Endothelial cell of umbilical vein (primary cell): ENCODE measurements at regions of chr1 and their contacts with region 1.

Region 1: GRCh38 chr1:235075188-235075926 is 53.3 kb downstream of the TOMM20 start:
- DNase-seq: peak; percentile 92
- H3K4me3 ChIP-seq: no peak overlapping the region
- H3K27ac ChIP-seq: peak overlapping the region; percentile 95
- H3K4me1 ChIP-seq: peaks cover 33% of the 10 kb centered on the region
- H3K27me3 ChIP-seq: no peaks in the 10 kb centered on the region
- CTCF ChIP-seq: no peak
- POLR2A ChIP-seq: peak; percentile 58

Region 2: GRCh38 chr1:234326497-234327366 is 748.6 kb before region 1 on chr1:
- CTCF ChIA-PET with region 1: no interaction called
- POLR2A ChIA-PET with region 1: no interaction called
- dilution Hi-C with region 1: no loop called
- intact Hi-C with region 1: loop called (anchors 5 kb)
- DNase-seq: peak; percentile 56
- H3K4me3 ChIP-seq: peak overlapping the region; percentile 34 to 65 (median 40)
- H3K27ac ChIP-seq: no peak overlapping the region
- H3K4me1 ChIP-seq: no peaks in the 10 kb centered on the region
- H3K27me3 ChIP-seq: peaks cover 12 to 13% of the 10 kb centered on the region in 2 experiments
- CTCF ChIP-seq: peak; percentile 81 to 85
- POLR2A ChIP-seq: no peak

Region 3: DNA sequence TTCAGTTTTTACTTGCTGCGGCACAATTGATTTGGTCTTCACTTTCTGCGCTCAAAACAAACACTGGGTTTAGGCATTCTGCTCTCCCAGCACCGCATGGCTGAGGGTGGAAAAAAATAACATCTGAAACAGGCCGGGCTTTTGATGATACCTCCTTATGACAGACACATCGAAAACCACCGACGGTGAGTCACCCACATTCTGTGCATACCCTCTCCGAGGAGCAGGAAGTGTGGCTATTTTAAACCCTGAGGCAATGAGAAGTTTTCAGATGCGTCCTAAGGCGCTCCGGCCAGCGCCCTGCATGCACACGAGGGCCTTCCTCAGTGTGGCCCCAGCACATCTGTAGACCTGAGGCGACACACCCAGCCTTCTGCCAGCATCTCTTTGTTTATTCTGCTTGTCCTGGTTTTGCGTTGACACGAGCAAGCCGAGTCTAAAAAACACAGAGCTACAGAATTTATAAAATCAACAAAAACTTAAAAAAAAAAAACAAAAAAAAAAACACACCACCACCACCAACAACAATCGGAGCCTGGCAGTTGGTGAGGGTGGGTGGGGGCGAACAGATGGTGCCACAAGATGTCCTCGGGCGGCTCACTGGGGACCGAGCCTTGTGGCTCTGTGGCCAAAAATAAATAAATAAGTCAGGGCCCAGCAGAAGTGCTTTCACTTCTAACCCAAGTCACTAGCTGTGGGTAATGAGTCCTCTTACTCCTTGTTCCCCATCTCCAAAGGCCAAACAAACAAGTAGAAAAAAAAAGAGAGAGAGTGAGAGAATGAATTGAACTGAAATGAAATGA is 302.8 kb before region 1 on chr1:
- CTCF ChIA-PET with region 1: no interaction called
- POLR2A ChIA-PET with region 1: no interaction called
- dilution Hi-C with region 1: no loop called
- intact Hi-C with region 1: loop called (anchors 2 kb)
- DNase-seq: peak; percentile 91
- H3K4me3 ChIP-seq: no peak overlapping the region
- H3K27ac ChIP-seq: peak overlapping the region; percentile 89
- H3K4me1 ChIP-seq: peaks cover 12% of the 10 kb centered on the region
- H3K27me3 ChIP-seq: peaks cover 2% of the 10 kb centered on the region in 2 experiments
- CTCF ChIP-seq: no peak
- POLR2A ChIP-seq: peak; percentile 62

Region 4: DNA sequence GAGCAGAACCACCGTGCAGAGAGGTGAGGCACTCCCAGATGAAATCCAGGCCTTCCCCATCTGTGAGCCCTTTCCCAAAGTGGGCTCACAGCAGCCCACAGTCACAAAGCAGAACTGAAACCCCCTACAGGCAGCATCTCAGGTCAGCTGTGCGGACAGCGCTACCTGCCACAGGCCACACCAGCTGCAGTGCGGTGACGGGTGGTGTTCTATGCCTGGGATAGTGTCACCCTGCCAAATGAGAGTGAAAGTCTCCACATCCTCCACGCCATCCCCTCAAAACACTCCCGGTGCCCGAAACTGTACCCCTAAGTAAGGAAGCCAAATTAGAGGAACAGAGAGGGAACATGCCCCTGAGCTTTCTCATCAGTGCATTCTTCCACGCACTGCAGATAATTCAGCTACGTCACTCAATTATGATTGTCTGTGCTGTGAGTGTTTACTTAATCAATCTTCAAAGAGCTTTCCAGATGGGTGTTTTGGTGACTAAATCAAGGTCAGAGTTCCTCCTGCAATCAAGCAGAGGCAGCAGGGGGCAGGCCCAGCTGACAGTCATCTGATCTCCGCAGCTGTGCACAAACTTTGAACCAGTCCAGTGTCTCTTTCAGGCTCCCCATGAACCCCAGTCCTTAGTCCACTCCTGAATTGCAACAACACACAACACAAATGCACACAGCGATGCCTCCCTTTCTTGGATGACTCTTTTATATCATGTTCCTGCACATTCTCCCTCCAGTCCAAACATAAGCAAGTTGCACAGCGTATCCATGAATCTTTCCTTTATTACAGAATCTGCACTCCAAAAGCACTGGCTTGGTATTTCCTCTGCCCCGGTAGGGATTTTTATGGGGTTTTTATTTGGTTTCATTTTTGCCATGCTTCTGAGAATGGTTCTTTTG is 96.7 kb before region 1 on chr1:
- CTCF ChIA-PET with region 1: no interaction called
- POLR2A ChIA-PET with region 1: no interaction called
- dilution Hi-C with region 1: no loop called
- intact Hi-C with region 1: loop called (anchors 1 kb)
- DNase-seq: peak; percentile 86
- H3K4me3 ChIP-seq: no peak overlapping the region
- H3K27ac ChIP-seq: peak overlapping the region; percentile 88
- H3K4me1 ChIP-seq: peaks cover 69% of the 10 kb centered on the region
- H3K27me3 ChIP-seq: no peaks in the 10 kb centered on the region
- CTCF ChIP-seq: no peak
- POLR2A ChIP-seq: no peak

Region 5: GRCh38 chr1:235011599-235012435 is 63.5 kb before region 1 on chr1:
- CTCF ChIA-PET with region 1: interaction called, 4 read pairs
- POLR2A ChIA-PET with region 1: no interaction called
- dilution Hi-C with region 1: no loop called
- intact Hi-C with region 1: loop called (anchors 1 kb)
- DNase-seq: peak; percentile 64
- H3K4me3 ChIP-seq: no peak overlapping the region
- H3K27ac ChIP-seq: peak overlapping the region; percentile 82
- H3K4me1 ChIP-seq: peaks cover 29% of the 10 kb centered on the region
- H3K27me3 ChIP-seq: no peaks in the 10 kb centered on the region
- CTCF ChIP-seq: no peak
- POLR2A ChIP-seq: no peak